ENCODE measurements at regions of chr1 and their contacts with region 1.

Region 1: DNA sequence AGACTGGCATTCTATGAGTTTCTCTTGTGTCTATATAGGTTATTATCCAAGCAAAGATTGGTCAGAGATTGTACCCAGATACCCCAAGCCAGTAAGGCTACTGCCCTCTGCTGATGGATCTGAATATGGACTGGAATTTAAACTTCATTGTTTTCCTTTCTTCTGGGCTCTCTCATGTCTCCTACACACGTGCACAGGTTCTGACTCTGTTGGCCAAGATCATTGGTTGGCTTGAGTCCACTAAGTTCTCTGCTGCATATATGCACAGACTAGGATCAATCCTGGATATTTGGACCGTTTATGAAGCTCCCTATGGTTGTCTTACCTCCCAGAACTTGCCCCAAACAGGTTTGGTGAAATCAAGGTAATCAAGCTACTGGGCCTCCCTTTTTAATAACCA is 69.7 kb downstream of the CC2D1B start:
- H3K4me3 Mint-ChIP-seq: no peak overlapping the region
- H3K27ac Mint-ChIP-seq: no peak overlapping the region
- H3K4me1 Mint-ChIP-seq: no peaks in the 10 kb centered on the region
- H3K27me3 Mint-ChIP-seq: peaks cover 28% of the 10 kb centered on the region

Region 2: GRCh38 chr1:52127181-52128180 is 168.9 kb before region 1 on chr1:
- intact Hi-C with region 1: loop called (anchors 1 kb)
- H3K4me3 Mint-ChIP-seq: no peak overlapping the region
- H3K27ac Mint-ChIP-seq: no peak overlapping the region
- H3K4me1 Mint-ChIP-seq: peaks cover 10% of the 10 kb centered on the region
- H3K27me3 Mint-ChIP-seq: peaks cover 44% of the 10 kb centered on the region

Region 3: GRCh38 chr1:52141513-52142219 is 154.7 kb before region 1 on chr1 and contains the start of gene ZFYVE9:
- intact Hi-C with region 1: loop called (anchors 1 kb)
- H3K4me3 Mint-ChIP-seq: peak within 1 kb of the TSS; percentile 67
- H3K27ac Mint-ChIP-seq: no peak within 1 kb of the TSS
- H3K4me1 Mint-ChIP-seq: peaks cover 23% of the 10 kb centered on the region
- H3K27me3 Mint-ChIP-seq: peaks cover 54% of the 10 kb centered on the region